ENCODE measurements at regions of chr14 and their contacts with region 1.

Region 1: DNA sequence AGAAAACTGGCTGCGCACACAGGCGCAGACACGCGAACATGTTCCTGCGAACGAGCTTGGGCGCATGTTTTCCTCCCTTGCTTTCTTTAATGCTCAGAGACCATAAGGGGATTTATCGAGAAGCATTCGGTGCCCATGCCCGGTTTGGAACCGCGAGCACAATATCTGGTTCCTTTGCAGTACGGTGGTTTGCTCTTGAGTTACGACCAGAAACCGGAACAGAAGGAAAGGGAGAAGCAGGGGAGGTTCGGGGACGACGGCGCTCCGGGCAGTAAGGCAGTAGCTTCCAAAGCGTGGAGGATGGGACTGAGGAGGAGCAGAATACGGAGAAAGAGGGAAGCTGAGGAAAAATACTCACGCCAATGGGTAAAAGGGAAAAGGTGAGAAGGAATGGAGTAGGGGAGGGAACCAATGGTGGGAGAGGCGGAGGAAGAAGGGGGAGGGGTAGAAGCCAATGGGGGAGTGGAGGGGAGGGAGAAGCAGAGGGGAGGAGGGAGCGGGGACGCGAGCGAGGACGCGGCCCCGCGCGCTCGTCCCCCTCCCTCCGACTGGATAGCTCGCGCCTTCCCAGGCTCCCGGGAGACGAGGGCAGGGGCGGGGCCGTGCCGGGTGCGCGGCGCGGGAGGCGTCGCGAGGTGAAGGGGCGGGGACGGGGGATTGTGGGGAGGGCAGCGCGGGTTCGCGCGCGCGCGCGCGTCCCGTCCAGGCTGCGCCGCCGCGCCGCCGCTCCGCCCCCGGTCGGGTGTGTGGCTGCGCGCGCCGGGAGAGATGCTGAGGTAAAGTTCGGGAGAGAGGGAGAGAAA is 625 bp upstream of the ARHGAP5 start:
- DNase-seq: peak; percentile 93
- H3K4me3 Mint-ChIP-seq: peak overlapping the region; percentile 97
- H3K27ac Mint-ChIP-seq: peak overlapping the region; percentile 94
- H3K4me1 Mint-ChIP-seq: peaks cover 34% of the 10 kb centered on the region
- H3K27me3 Mint-ChIP-seq: peaks cover 17% of the 10 kb centered on the region

Region 2: DNA sequence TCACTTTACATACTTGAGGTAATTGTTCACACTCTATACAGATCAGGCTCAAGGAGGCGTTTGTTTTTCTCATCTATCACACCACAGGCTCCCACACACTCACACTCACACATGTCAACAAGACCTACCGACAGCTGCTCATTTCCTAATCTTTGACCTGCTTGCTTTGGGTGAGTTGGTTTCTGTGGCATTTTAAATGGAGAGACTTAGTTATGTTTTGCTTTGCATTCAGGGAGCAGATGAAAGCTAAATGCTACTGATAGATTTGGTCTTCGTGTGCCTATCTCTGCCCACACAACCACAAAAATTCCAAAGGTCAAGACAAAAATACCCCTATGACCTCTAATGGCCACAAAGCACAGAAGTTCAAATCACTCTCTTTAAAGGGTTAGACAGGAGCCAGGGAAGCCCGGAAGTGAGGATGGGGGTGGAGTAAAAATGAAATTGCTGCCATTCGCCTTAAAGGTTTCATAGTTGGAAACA is 1721.0 kb before region 1 on chr14:
- intact Hi-C with region 1: loop called (anchors 5 kb)
- DNase-seq: peak; percentile 61
- H3K4me3 Mint-ChIP-seq: peak overlapping the region; percentile 5
- H3K27ac Mint-ChIP-seq: peak overlapping the region; percentile 83
- H3K4me1 Mint-ChIP-seq: peaks cover 23% of the 10 kb centered on the region
- H3K27me3 Mint-ChIP-seq: no peaks in the 10 kb centered on the region

Region 3: DNA sequence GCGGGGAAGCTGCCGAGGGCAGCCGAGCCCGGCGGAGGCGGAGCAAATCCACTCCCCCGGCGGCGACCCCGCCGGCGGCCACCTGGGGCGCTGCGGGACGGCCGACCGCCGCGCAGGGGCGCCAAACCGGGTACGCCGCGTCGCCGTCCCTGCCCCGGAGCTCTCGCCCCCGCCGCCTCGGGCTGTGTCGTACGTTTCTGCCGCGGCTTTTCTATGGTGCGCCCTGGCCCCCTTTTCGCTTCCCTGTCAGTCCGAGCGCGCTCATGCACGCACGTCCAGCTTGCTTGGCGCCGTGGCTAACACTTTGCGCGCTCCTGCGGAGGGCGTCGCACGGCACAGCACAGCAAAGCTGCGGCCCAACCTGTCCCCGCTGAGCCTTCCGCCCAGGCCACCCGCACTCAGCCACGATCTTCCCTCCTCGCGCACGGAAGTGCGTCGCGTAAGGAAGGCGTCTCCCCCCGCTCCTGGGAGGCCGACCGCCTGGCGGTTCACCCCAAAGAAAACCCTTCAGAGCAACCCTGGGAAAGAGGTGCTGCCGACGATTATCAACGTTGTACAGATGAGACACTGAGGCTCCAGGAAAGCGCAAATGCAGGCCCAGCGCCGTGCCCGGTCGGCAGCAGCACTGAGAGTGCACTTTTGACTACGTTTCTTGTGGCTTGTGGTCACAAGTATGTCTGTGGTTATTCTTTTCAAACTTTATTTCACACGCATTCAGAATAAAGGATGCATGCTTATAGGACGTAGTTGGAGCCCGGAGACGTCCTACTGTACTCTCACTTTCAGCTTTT is 868.5 kb before region 1 on chr14 and contains the start of gene HECTD1:
- intact Hi-C with region 1: loop called (anchors 5 kb)
- DNase-seq: peak; percentile 96
- H3K4me3 Mint-ChIP-seq: peak within 1 kb of the TSS; percentile 86
- H3K27ac Mint-ChIP-seq: peak within 1 kb of the TSS; percentile 100
- H3K4me1 Mint-ChIP-seq: peaks cover 32% of the 10 kb centered on the region
- H3K27me3 Mint-ChIP-seq: no peaks in the 10 kb centered on the region
- total RNA-seq, gene HECTD1: 116 TPM in 2 replicates

Region 4: GRCh38 chr14:31489691-31490090 is 586.8 kb before region 1 on chr14:
- intact Hi-C with region 1: no loop called
- DNase-seq: no peak
- H3K4me3 Mint-ChIP-seq: no peak overlapping the region
- H3K27ac Mint-ChIP-seq: no peak overlapping the region
- H3K4me1 Mint-ChIP-seq: no peaks in the 10 kb centered on the region
- H3K27me3 Mint-ChIP-seq: peaks cover 7% of the 10 kb centered on the region

Region 5: DNA sequence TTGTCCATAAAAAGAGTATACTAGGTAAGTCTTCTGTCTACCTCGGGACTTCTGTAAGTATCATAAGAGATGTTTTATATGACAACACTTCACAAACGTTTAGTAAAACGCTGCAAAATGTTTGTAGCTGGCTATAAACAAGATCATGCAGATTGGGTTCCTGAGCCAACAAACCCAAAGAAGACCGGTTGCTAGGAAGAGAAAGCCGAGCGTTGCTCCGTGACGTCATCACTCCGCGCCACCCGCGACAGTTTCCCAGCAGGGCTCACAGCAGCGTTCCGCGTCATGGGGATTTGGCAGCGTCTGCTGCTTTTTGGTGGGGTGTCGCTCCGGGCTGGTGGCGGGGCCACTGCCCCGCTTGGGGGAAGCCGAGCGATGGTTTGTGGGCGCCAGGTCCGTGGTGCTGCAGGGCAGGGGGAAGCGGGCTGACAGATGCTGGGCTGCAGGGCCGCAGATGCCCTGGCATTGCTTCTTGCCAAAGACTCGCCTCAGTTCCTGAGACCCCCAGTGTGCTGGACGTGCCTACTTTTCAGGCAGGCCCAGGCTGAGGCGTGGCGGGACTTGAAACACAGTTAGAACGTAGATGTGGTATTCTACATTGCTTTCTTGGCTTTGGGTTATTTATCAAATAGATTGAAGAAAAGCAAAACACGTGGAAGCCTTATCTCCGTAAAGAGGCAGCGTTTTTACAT is 515.2 kb before region 1 on chr14 and contains the start of gene NUBPL:
- intact Hi-C with region 1: loop called (anchors 5 kb)
- DNase-seq: peak; percentile 99
- H3K4me3 Mint-ChIP-seq: peak within 1 kb of the TSS; percentile 95
- H3K27ac Mint-ChIP-seq: peak within 1 kb of the TSS; percentile 97
- H3K4me1 Mint-ChIP-seq: peaks cover 16% of the 10 kb centered on the region
- H3K27me3 Mint-ChIP-seq: peaks cover 12% of the 10 kb centered on the region
- total RNA-seq, gene NUBPL: 12.1 and 12.3 TPM in 2 replicates

Region 6: GRCh38 chr14:31937721-31938346 is 138.6 kb before region 1 on chr14:
- intact Hi-C with region 1: loop called (anchors 2 kb)
- DNase-seq: peak; percentile 88
- H3K4me3 Mint-ChIP-seq: no peak overlapping the region
- H3K27ac Mint-ChIP-seq: peak overlapping the region; percentile 76
- H3K4me1 Mint-ChIP-seq: peaks cover 11% of the 10 kb centered on the region
- H3K27me3 Mint-ChIP-seq: peaks cover 4% of the 10 kb centered on the region

Region 7: GRCh38 chr14:32202998-32203882 is 126.8 kb after region 1 on chr14 and contains the start of gene RNU6-8:
- intact Hi-C with region 1: loop called (anchors 1 kb)
- DNase-seq: peak; percentile 95
- H3K4me3 Mint-ChIP-seq: peak within 1 kb of the TSS; percentile 87
- H3K27ac Mint-ChIP-seq: peak within 1 kb of the TSS; percentile 94
- H3K4me1 Mint-ChIP-seq: peaks cover 36% of the 10 kb centered on the region
- H3K27me3 Mint-ChIP-seq: peaks cover 24% of the 10 kb centered on the region
- total RNA-seq, gene RNU6-8: not detected in 2 replicates

Region 8: DNA sequence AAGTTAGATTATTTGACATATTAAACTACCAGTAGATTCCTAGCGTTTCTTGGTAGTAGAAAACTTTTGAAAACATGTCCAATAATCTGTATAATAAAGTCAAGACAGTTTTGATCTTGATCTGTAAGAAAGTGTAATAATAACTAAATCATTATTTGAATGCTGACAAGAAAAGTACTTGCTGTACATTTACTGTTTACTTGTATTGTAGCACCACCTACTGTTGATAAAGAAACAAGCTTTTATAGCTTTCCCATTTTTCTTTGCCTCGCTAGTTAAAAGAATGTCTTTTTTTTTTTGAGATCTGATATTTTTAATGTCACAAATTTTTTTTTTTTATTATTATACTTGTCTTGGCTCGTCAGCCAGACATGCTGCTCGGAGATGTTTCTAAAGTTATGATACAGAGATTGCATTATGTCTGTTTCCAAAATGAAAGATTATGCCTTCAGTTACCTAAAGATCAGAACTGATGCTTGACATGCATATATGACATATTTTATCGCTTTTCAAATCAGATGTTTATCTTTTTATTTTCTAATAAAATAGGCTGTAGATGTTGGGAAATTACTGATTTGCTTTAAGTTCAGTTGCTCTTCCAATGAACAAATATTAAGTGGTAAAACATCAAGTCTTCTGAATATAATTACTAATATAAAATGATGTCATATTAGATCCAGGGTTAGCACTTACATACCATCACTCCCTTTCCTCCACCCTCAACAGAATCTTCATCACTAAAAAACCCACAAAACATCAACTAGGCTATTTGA is 393.1 kb after region 1 on chr14:
- intact Hi-C with region 1: loop called (anchors 5 kb)
- DNase-seq: no peak
- H3K4me3 Mint-ChIP-seq: no peak overlapping the region
- H3K27ac Mint-ChIP-seq: no peak overlapping the region
- H3K4me1 Mint-ChIP-seq: no peaks in the 10 kb centered on the region
- H3K27me3 Mint-ChIP-seq: peaks cover 7% of the 10 kb centered on the region

Measured in activated CD4-positive, alpha-beta T cell treated with anti-CD3 and anti-CD28 coated beads, Interleukin-2, amount 10 ng/mL, durations not matched to agents 24 days and 14 days (primary cell).